ENCODE measurements at regions of chr1 and their contacts with region 1.

Region 1: DNA sequence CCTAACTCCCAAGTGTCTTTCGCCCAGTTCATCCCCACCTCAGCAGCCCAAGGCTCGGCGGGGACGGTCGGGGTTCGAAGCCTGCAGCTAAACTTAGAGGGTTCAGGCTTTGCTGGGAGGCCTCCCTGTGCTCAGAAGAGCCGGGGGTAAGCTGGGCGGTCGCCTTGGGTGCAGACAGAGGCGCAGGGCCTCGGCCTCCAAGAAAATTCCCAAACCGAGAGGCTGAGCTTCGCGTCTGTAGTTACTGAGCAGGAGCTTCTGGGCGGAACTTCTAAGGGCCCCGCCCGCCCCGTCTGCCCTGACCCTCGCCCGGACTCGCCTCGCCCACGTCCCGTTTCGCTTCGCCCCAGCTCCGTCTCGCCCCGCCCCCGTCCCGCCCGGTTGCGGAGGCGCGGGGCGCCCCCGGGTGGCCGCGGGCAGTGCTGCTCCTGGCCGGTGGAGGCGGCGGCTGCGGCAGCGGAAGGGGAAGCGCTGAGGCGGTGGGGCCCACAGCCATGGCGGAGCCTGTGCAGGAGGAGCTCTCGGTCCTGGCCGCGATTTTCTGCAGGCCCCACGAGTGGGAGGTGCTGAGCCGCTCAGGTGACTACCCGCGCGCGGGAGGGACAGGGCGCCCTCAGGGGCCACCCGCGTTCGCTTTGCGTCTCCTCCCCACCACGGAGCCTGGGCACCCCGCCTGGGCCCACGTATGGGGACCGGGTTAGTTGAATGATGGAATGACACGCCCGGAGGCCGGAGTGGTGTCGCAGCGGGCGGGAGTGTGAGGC is at the start of gene RWDD3:
- DNase-seq: peak; percentile 97
- ATAC-seq: peak; percentile 95
- total RNA-seq, gene RWDD3: 16.4 TPM

Region 2: GRCh38 chr1:94854458-94855306 is 379.2 kb before region 1 on chr1:
- intact Hi-C with region 1: loop called (anchors 2 kb)
- DNase-seq: peak; percentile 83
- ATAC-seq: peak; percentile 95

Region 3: DNA sequence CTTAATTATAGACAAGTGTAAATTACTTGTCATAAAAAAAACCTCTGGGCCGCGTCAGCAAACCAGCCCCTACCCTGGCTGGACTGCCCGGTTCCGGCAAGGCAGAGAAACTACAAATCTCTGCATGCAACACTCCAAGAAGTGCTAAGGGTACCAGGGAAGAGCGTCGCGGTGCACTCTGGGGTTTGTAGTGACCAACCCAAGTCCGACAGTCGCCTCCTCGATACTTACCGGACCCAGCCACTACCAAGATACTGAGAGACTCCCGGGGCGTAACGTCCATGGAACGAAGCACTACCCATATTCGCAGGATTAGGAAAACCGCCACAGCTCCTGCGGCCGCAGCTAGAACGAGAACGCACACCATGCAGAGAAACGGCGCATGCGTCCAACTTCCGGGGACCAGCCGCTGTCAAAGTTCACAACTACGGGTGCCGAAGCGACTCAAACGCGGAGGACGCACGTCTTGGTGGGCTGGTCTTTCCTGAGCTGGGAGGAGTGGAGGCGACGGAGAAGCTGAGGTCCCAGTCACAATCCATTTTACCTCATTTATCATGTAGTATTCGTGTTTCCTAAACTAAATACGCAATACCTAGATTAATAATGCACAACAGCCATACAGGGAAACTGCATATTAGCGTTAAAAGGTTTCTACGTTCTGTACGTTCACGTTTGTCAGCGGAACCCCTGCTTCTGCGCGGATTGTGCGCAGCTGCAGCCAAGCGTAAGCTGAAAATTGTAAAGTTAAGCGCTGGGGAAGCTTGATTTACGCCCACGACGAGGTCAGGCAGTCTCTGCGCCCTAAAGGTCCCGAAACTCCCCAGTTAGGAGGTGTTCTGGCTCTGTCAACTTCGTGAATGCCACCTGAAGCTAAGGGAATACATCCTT is 161.1 kb before region 1 on chr1 and contains the start of gene ALG14:
- intact Hi-C with region 1: loop called (anchors 1 kb)
- DNase-seq: peak; percentile 95
- ATAC-seq: peak; percentile 99
- total RNA-seq, gene ALG14: 2.0 TPM

Region 4: DNA sequence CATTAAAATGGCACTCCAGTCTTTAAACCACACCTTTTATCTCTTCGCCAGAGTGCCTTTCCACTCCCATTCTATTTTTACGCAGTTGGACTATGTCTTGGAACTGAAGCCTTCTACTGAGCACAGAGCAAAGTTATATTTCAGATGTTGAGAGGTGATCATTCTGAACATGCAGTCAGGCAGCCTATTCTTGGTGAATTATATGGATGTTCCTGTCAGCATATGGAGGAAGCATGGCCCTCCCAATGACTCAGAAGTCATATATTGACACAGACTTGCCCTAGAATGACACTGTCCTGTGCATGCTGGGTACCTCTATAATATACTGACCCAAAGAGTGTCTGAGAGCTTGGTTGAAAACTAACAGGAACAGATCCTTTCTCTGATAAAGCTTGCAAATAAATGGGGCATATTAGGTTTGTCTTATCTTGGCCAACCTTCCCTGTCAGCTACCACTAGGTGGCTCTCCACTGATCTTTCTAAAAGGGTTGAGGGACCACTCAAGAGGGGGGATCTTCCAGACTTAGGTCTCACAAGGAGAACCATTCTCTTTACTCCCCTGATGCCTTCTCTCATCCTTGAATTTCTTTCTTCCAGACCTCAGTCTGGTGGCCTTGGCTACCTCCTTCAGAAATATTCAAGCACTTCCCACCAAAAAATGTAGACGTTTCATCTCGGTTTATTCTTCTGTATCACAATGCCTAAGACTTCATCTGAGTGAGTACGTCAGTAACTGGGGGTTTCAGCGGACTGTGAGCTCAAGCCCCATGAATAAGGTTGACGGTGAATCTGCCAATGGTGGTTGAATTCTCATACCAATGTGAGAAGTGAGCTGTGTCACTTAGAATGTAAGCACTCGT is 149.4 kb before region 1 on chr1:
- intact Hi-C with region 1: loop called (anchors 2 kb)
- DNase-seq: no peak
- ATAC-seq: no peak

Region 5: DNA sequence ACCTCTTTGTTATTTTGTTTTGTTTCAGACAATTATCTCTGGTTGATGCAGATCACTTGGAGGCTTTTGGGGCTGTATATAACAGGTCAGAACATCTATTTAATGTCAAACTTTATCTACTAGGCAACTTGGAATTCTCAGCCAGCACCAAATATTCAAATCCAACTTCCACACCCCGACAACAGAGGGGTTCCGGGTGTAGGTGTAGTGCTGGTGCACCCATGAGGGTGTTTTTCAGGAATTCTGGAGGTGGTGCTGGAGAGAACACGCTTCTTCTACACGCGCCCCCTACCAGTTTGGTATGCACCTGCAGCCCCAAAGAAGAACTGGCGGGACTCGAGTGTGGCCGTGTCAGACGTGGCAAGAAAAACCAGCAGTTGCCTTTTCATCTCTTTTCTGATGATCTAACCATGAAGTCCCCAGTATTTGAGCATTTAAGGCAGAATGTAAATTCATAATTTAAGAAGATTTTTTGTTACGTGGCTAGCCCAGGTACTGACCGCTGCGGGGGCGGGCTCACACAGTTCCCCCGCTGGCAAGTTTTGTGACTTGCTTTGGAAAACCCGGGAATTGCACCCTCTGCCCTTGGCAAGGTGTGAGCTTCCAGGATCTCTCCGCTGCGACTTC is 117.2 kb before region 1 on chr1:
- intact Hi-C with region 1: loop called (anchors 1 kb)
- DNase-seq: peak; percentile 78
- ATAC-seq: peak; percentile 82

Region 6: GRCh38 chr1:95124342-95124741 is 109.6 kb before region 1 on chr1:
- intact Hi-C with region 1: loop called (anchors 2 kb)
- DNase-seq: no peak
- ATAC-seq: no peak

Region 7: GRCh38 chr1:95197616-95198252 is 36.2 kb before region 1 on chr1:
- intact Hi-C with region 1: loop called (anchors 2 kb)
- DNase-seq: no peak
- ATAC-seq: peak; percentile 38